Activated CD8-positive, alpha-beta T cell treated with anti-CD3 and anti-CD28 coated beads for 36 hours (primary cell): ENCODE measurements at regions of chr2 and their contacts with region 1.

Region 1: DNA sequence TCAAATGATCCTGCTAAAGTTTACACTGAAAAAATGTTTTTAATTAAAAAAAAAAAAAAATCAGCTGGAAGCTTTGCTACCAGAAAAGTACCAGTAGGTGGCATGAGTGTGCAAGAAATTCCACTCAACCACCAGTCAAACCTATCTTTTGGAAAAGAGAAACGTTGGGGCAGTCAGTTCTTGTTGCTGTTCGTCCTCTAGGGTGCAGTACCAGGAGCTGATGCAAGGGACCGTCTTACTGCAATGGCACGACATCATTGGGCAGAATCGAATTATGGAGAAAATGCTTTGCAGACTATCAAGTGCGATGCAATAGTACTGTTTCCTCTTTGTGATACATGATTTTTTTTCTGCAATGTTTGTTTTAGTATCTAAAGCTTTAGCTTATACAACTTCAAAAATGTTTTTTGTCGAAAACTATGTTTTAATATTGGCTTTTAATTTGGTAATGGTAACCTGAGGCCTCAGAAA is 18.3 kb downstream of the YPEL5 start:
- DNase-seq: peak; percentile 80
- ATAC-seq: peak; percentile 100
- H3K4me3 Mint-ChIP-seq: no peak overlapping the region
- H3K27ac Mint-ChIP-seq: no peak overlapping the region
- H3K4me1 Mint-ChIP-seq: peaks cover 21% of the 10 kb centered on the region
- H3K27me3 Mint-ChIP-seq: no peaks in the 10 kb centered on the region
- CTCF ChIP-seq: peak; percentile 82

Region 2: GRCh38 chr2:30139131-30139870 is 25.8 kb before region 1 on chr2:
- CTCF ChIA-PET with region 1: interaction called, 15 read pairs
- POLR2A ChIA-PET with region 1: no interaction called
- intact Hi-C with region 1: no loop called
- DNase-seq: peak; percentile 73
- ATAC-seq: peak; percentile 77
- H3K4me3 Mint-ChIP-seq: peak overlapping the region; percentile 43
- H3K27ac Mint-ChIP-seq: peak overlapping the region; percentile 83
- H3K4me1 Mint-ChIP-seq: peaks cover 22% of the 10 kb centered on the region
- H3K27me3 Mint-ChIP-seq: peaks cover 2% of the 10 kb centered on the region
- CTCF ChIP-seq: no peak

Region 3: GRCh38 chr2:30193104-30193681 is 28.1 kb after region 1 on chr2:
- CTCF ChIA-PET with region 1: interaction called, 11 read pairs
- POLR2A ChIA-PET with region 1: no interaction called
- intact Hi-C with region 1: no loop called
- DNase-seq: no peak
- ATAC-seq: no peak
- H3K4me3 Mint-ChIP-seq: no peak overlapping the region
- H3K27ac Mint-ChIP-seq: no peak overlapping the region
- H3K4me1 Mint-ChIP-seq: peaks cover 6% of the 10 kb centered on the region
- H3K27me3 Mint-ChIP-seq: no peaks in the 10 kb centered on the region
- CTCF ChIP-seq: no peak

Region 4: DNA sequence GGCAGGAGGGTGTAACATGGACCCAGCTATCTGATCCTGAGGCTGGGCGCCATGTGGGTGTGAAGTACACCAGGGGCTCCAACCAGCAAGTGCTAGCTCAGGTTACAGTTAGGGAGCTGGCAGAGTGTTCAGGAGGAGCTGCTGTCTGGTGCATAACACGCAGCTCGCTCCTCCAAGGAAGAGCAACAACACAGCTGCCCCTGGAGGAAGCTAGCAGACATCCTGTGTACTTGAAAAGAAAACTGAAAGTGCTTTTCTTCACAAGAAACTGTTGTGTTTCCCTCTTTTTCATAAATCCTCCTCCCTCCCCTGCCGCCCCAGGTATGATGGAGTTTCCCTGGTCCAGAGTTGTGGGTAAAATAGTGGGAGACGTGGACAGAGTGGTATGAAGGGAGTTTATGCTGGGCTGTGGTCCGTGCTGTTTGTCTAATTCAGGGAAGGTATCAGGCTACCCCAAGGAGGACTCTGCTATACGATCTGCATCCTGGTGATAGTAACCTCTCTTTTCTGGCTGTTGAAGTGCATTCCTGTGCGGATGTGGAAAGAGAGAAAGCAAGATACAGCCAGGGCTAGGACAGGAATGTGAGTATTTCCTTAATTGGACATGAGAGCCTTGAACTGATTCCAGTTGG is 60.2 kb after region 1 on chr2:
- CTCF ChIA-PET with region 1: interaction called, 29 read pairs
- POLR2A ChIA-PET with region 1: interaction called, 4 read pairs
- intact Hi-C with region 1: no loop called
- DNase-seq: peak; percentile 53
- ATAC-seq: peak; percentile 45
- H3K4me3 Mint-ChIP-seq: peak overlapping the region; percentile 87
- H3K27ac Mint-ChIP-seq: peak overlapping the region; percentile 99
- H3K4me1 Mint-ChIP-seq: peaks cover 74% of the 10 kb centered on the region
- H3K27me3 Mint-ChIP-seq: no peaks in the 10 kb centered on the region
- CTCF ChIP-seq: no peak

Region 5: GRCh38 chr2:30336978-30337841 is 172.1 kb after region 1 on chr2:
- CTCF ChIA-PET with region 1: interaction called, 22 read pairs
- POLR2A ChIA-PET with region 1: interaction called, 6 read pairs
- intact Hi-C with region 1: no loop called
- DNase-seq: peak; percentile 67
- ATAC-seq: peak; percentile 76
- H3K4me3 Mint-ChIP-seq: peak overlapping the region; percentile 59
- H3K27ac Mint-ChIP-seq: peak overlapping the region; percentile 96
- H3K4me1 Mint-ChIP-seq: peaks cover 78% of the 10 kb centered on the region
- H3K27me3 Mint-ChIP-seq: no peaks in the 10 kb centered on the region
- CTCF ChIP-seq: no peak

Region 6: DNA sequence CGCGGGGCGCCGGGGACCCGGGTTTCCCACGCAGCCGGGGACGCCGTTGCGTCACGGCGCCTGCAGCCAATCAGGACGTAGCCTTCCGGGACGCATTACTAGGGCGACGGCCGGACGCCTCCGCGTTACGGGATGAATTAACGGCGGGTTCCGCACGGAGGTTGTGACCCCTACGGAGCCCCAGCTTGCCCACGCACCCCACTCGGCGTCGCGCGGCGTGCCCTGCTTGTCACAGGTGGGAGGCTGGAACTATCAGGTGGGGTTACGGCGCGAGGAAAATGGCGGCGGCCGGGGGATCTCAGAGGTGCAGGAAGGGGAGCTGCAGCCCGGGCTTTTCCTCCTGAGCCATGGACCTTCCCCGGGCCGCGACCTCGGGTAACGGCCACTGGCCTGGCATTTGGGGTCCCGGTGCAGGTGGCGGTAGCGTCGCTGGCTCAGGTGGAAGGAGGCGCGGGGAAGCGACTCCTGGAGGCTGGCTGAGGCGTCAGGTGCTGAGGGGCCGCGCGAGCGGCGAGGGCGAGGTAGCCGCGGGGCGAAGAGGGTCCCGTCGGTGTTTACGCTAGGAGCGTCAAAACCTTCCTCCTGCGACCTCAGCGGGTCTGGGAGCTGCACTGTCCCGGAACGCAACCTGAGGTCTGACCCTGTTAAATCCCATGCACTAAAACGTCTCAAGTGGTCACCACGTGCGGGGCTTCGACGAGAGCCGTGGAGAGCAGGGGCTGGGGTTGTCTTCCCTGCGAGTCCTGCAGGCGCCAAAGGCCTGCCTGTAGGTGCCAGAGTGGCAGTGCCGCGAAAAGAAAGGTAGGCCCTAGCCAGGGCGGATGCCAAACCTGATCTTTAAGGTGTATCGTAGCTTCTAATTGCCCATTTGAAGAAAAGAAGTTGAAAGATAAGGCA is 282.3 kb after region 1 on chr2 and contains the start of gene LCLAT1:
- CTCF ChIA-PET with region 1: interaction called, 13 read pairs
- POLR2A ChIA-PET with region 1: interaction called, 3 read pairs
- intact Hi-C with region 1: no loop called
- DNase-seq: peak; percentile 90
- ATAC-seq: peak; percentile 88
- H3K4me3 Mint-ChIP-seq: peak within 1 kb of the TSS; percentile 89
- H3K27ac Mint-ChIP-seq: peak within 1 kb of the TSS; percentile 97
- H3K4me1 Mint-ChIP-seq: peaks cover 38% of the 10 kb centered on the region
- H3K27me3 Mint-ChIP-seq: no peaks in the 10 kb centered on the region
- CTCF ChIP-seq: no peak
- total RNA-seq, gene LCLAT1: 19.0 to 20.5 TPM

Region 7: DNA sequence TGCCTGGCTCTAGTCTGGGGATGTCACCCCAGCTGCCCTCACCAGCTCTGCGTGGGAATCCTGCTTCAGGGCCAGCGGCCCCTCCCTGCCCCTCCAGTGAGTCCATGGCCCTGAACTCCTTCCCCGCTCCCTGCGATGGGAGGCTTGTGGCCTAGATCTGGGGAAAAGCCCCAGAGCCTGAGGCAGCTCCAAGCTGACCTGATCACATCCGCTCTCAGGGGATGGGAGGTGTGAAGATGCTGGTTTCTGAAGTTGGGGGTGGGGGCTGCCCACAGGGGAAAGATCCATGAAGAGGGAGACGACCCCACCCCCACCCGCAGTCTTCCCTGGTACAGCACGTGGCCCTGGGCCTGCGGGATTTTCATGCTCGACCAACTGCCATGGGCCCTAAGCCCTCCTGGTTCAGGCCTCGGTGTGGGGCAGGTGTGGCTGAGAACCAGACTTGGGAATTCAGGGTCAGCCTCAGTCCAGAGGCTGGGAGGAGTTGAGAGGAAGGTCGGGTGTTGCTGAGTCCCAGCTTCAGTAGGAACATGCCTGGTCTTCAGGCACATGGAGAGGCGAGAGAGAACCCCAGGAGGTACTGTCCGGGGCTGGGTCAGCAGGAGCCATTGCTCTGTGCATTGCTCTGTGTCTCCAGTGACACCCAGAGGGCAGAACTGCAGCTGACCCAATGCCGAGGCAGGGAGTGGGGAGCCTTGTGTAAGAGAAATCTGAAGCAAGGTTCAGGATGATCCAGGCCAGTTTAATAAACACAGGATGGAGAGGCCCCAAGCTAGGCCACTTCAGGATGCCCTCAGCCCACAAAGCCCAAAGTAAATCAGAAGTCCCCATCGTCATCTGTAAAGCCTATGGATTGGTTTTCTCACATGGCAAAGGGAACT is 527.1 kb after region 1 on chr2:
- CTCF ChIA-PET with region 1: interaction called, 35 read pairs
- POLR2A ChIA-PET with region 1: no interaction called
- intact Hi-C with region 1: no loop called
- DNase-seq: no peak
- ATAC-seq: no peak
- H3K4me3 Mint-ChIP-seq: no peak overlapping the region
- H3K27ac Mint-ChIP-seq: no peak overlapping the region
- H3K4me1 Mint-ChIP-seq: no peaks in the 10 kb centered on the region
- H3K27me3 Mint-ChIP-seq: no peaks in the 10 kb centered on the region
- CTCF ChIP-seq: no peak